Psoas muscle (tissue), 8 donors: ENCODE measurements at regions of chr15 and their contacts with region 1.

Region 1: DNA sequence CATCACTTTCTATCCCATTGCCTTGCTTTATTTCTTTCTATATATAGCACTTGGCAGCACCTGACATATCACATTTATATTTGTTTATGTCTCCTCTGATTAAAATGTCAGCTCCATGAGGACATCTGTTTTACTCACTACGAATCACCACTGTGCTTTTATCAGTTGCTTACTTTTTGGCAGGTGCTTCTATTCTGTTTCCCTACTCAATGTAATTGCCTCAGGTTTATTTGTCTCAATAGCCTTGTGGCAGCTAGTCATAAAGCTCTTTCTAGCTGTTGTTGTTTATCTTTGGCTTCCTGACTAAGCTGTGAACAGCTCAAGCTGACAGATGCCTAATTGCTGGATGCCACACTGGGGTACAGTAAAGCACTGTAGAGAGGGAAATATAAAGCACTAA is 85.5 kb downstream of the VPS13C start:
- DNase-seq: no peak
- ATAC-seq: peak; percentile 78 to 95 (median 86)
- H3K4me3 ChIP-seq: no peak overlapping the region
- H3K27ac ChIP-seq: peak overlapping the region; percentile 78
- H3K4me1 ChIP-seq: peaks cover 41% of the 10 kb centered on the region
- H3K27me3 ChIP-seq: no peaks in the 10 kb centered on the region
- CTCF ChIP-seq: no peak

Region 2: GRCh38 chr15:61916104-61916503 is 58.7 kb before region 1 on chr15:
- intact Hi-C with region 1: loop called in 1 of 2 experiments (anchors 10 kb)
- DNase-seq: no peak
- ATAC-seq: peak; percentile 75 to 92 (median 82)
- H3K4me3 ChIP-seq: no peak overlapping the region
- H3K27ac ChIP-seq: peak overlapping the region; percentile 57
- H3K4me1 ChIP-seq: peaks cover 13% of the 10 kb centered on the region
- H3K27me3 ChIP-seq: no peaks in the 10 kb centered on the region
- CTCF ChIP-seq: no peak

Region 3: GRCh38 chr15:62060113-62060895 is 85.5 kb after region 1 on chr15 and contains the start of gene VPS13C:
- intact Hi-C with region 1: loop called (anchors 10 kb)
- DNase-seq: peak; percentile 94 to 97
- ATAC-seq: peak; percentile 98 to 99 (median 99)
- H3K4me3 ChIP-seq: peak within 1 kb of the TSS; percentile 90
- H3K27ac ChIP-seq: peak within 1 kb of the TSS; percentile 96
- H3K4me1 ChIP-seq: peaks cover 4% of the 10 kb centered on the region
- H3K27me3 ChIP-seq: no peaks in the 10 kb centered on the region
- CTCF ChIP-seq: peak; percentile 77
- total RNA-seq, gene VPS13C: 24.8 to 34.1 (median 30.6) TPM